CD4-positive, alpha-beta memory T cell (primary cell): ENCODE measurements at regions of chr2 and their contacts with region 1.

Region 1: GRCh38 chr2:210476194-210477128 is at the start of gene LANCL1:
- DNase-seq: peak; percentile 76 to 83 (median 80)
- H3K4me3 ChIP-seq: peak within 1 kb of the TSS; percentile 74 to 82
- H3K4me3 Mint-ChIP-seq: peak within 1 kb of the TSS; percentile 99 to 100 (median 100)
- H3K27ac ChIP-seq: peak within 1 kb of the TSS; percentile 87
- H3K27ac Mint-ChIP-seq: peak within 1 kb of the TSS; percentile 95 to 100 (median 99)
- H3K4me1 ChIP-seq: peaks cover 44% of the 10 kb centered on the region
- H3K4me1 Mint-ChIP-seq: peaks cover 45 to 72% (median 61%) of the 10 kb centered on the region in 4 donors
- H3K27me3 ChIP-seq: no peaks in the 10 kb centered on the region
- H3K27me3 Mint-ChIP-seq: no peaks in the 10 kb centered on the region
- total RNA-seq, gene LANCL1: 30.2 to 32.8 TPM

Region 2: GRCh38 chr2:210171309-210172203 is 304.9 kb before region 1 on chr2 and contains the start of gene KANSL1L:
- CTCF ChIA-PET with region 1: no interaction called
- POLR2A ChIA-PET with region 1: no interaction called
- intact Hi-C with region 1: loop called (anchors 2 kb)
- DNase-seq: peak; percentile 92 to 94 (median 93)
- H3K4me3 ChIP-seq: peak within 1 kb of the TSS; percentile 81 to 97
- H3K4me3 Mint-ChIP-seq: peak within 1 kb of the TSS; percentile 96 to 99 (median 98)
- H3K27ac ChIP-seq: peak within 1 kb of the TSS; percentile 65
- H3K27ac Mint-ChIP-seq: peak within 1 kb of the TSS; percentile 96 to 99 (median 98)
- H3K4me1 ChIP-seq: peaks cover 18% of the 10 kb centered on the region
- H3K4me1 Mint-ChIP-seq: peaks cover 9 to 28% (median 18%) of the 10 kb centered on the region in 4 donors
- H3K27me3 ChIP-seq: no peaks in the 10 kb centered on the region
- H3K27me3 Mint-ChIP-seq: peaks cover 0 to 8% of the 10 kb centered on the region in 2 donors
- total RNA-seq, gene KANSL1L: 10.7 to 12.1 TPM

Region 3: DNA sequence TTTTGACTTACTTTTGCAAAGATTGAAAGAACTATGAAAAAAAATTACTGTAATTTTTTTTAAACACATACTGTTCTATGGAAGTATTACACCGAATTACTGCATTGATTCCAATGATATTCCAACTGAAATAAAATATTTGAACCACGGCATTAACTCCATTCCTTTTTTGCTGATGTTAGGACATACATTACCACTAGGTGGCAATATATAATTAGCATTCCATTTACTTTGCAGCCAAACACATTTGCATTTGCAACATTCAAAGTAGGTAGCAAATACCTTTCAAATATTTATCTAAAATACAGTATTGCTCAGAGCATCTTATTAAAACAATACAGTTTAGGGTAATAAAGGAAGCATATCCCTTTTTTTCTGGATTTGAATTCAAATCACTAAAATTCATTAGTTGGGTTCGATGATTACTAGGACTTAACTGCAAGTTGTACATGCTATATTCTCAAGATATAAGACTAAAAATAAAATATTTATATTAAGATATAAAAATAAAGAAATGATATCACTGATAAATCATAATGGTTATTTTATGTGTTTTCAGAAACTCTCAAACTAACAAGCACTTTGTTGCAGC is 31.2 kb before region 1 on chr2:
- CTCF ChIA-PET with region 1: no interaction called
- POLR2A ChIA-PET with region 1: no interaction called
- intact Hi-C with region 1: loop called (anchors 1 kb)
- DNase-seq: peak in 4 of 5 donors; percentile 11 to 18 (median 16)
- H3K4me3 ChIP-seq: no peak overlapping the region
- H3K4me3 Mint-ChIP-seq: no peak overlapping the region
- H3K27ac ChIP-seq: no peak overlapping the region
- H3K27ac Mint-ChIP-seq: no peak overlapping the region
- H3K4me1 ChIP-seq: no peaks in the 10 kb centered on the region
- H3K4me1 Mint-ChIP-seq: peaks cover 10 to 23% (median 16%) of the 10 kb centered on the region in 4 donors
- H3K27me3 ChIP-seq: no peaks in the 10 kb centered on the region
- H3K27me3 Mint-ChIP-seq: no peaks in the 10 kb centered on the region

Region 4: GRCh38 chr2:211631503-211631902 is 1155.0 kb after region 1 on chr2:
- CTCF ChIA-PET with region 1: no interaction called
- POLR2A ChIA-PET with region 1: no interaction called
- intact Hi-C with region 1: no loop called
- DNase-seq: no peak
- H3K4me3 ChIP-seq: no peak overlapping the region
- H3K4me3 Mint-ChIP-seq: no peak overlapping the region
- H3K27ac ChIP-seq: no peak overlapping the region
- H3K27ac Mint-ChIP-seq: no peak overlapping the region
- H3K4me1 ChIP-seq: no peaks in the 10 kb centered on the region
- H3K4me1 Mint-ChIP-seq: no peaks in the 10 kb centered on the region
- H3K27me3 ChIP-seq: no peaks in the 10 kb centered on the region
- H3K27me3 Mint-ChIP-seq: no peaks in the 10 kb centered on the region